GM13976 (cell line): ENCODE measurements at regions of chr6 and their contacts with region 1.

Region 1: GRCh38 chr6:70221025-70221714 is 81.7 kb downstream of the COL9A1 start:
- DNase-seq: peak; percentile 50
- CTCF ChIP-seq: peak; percentile 30

Region 2: DNA sequence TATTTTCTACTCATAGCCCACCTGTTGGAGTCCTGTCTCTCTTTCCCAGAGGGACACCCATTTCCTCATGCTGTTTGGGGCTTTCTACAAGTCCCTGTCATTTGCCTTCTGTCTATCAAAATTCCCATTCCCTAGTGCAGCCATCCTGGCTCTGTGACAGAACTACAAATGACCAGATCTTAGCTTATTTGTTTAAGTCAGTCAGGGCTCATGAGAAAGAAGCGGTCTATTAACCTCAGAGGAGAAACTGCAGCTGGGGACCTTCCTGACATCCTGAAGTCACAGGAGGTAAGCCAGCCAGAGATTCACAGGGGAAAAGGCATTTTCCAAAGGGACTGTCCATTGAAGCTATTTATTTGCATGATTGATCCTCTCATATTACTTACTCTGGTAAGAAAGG is 83.4 kb after region 1 on chr6:
- in situ Hi-C with region 1: loop called (anchors 10 kb)
- DNase-seq: no peak
- CTCF ChIP-seq: no peak

Region 3: DNA sequence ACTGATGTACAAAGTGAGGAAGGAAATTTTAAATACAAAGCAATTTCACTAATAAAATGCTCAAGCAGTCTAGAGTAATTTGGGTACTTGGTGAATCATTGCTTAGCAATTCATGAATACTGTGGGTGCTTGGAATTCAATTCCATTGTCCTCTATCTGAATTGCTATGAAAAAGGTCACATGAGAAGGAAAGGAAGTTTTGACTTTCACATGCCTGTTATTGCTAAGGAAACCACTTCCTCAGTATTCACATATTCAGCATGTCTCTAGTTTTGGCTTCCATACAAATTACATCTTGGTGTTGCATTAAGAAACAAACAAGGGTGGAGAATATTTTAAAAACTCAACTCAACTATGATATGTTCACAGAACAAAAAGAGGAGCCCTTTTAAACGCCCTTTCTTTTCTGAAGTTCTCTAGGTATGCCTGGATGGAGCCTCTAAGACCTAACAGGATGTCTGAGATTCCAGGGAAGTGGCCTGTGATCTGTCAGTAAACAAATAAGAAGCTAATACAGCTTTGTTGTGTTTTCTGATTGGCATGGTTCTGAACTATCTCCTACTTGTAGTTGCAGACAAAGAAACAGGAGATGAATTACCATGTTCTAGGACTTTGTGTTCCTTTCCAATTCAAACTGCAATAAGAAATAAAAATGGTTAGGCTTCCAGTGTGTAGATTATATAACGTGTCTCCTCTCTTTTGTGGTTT is 1257.8 kb after region 1 on chr6:
- in situ Hi-C with region 1: no loop called
- DNase-seq: no peak
- CTCF ChIP-seq: no peak